ENCODE measurements at regions of chr3 and their contacts with region 1.

Region 1: DNA sequence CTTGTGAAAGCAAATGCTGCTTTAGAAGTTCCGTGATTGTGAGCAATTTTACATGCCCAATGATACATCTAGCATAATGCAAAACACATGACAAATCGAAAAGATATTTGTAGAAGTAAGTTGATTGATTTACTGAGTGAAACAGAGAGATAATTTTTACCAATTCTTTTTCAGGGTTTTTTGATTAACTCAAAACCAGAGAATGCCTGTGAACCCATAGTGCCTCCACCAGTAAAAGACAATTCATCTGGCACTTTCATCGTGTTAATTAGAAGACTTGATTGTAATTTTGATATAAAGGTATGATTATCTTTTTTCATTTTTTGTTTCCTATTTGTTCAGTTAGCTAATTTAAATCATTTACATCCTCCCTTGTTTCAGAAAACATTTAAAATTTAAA is 58.8 kb downstream of the RNF13 start:
- DNase-seq: no peak
- ATAC-seq: no peak
- H3K4me3 ChIP-seq: no peak overlapping the region
- H3K4me3 Mint-ChIP-seq: no peak overlapping the region
- H3K27ac ChIP-seq: no peak overlapping the region
- H3K27ac Mint-ChIP-seq: no peak overlapping the region
- H3K4me1 ChIP-seq: no peaks in the 10 kb centered on the region
- H3K4me1 Mint-ChIP-seq: peaks cover 9 to 19% (median 14%) of the 10 kb centered on the region in 3 donors
- H3K27me3 ChIP-seq: no peaks in the 10 kb centered on the region
- H3K27me3 Mint-ChIP-seq: no peaks in the 10 kb centered on the region

Region 2: GRCh38 chr3:149534671-149535332 is 337.1 kb before region 1 on chr3:
- CTCF ChIA-PET with region 1: no interaction called
- POLR2A ChIA-PET with region 1: interaction called in 1 of 2 experiments, 17 read pairs
- DNase-seq: no peak
- ATAC-seq: no peak
- H3K4me3 ChIP-seq: no peak overlapping the region
- H3K4me3 Mint-ChIP-seq: no peak overlapping the region
- H3K27ac ChIP-seq: no peak overlapping the region
- H3K27ac Mint-ChIP-seq: no peak overlapping the region
- H3K4me1 ChIP-seq: no peaks in the 10 kb centered on the region
- H3K4me1 Mint-ChIP-seq: peaks cover 2 to 9% (median 7%) of the 10 kb centered on the region in 3 donors
- H3K27me3 ChIP-seq: peaks cover 0 to 9% of the 10 kb centered on the region in 2 experiments
- H3K27me3 Mint-ChIP-seq: peaks cover 0 to 13% of the 10 kb centered on the region in 2 donors

Region 3: DNA sequence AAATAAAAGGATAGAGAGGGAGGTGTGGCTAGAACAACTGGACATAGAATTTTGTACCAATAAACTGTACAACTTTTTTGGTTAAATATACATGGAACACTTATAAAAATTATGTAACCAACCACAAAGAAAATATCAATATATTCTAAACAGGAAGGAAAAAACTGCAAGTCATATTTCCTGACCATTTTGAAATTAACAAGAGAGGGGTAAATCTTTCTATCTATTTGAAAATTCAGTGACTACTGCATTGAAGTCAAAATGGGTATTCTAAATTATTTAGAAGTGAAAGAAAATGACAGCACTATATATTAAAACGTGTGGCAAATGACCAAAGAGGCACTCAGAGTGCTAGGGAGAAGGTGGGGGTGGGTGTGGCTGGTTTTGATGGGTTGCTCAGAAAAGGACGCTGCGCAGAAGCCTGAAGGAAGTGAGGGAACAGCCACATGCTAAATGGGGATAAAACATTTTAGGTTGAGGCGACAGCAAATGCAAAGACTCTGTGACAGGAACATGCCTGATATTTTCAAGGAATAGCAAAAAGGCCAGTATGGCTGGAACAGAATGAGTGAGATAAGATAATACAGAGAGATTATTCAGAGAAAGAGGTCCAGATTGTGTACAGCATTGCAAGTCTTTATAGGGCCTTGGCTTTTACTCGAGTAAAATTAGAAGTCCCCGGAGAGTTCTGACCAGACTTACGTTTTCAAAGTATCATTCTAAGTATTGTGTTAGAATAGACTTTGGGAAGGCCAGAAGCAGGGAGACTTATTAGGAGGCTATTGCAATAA is 790.8 kb after region 1 on chr3:
- CTCF ChIA-PET with region 1: interaction called in 1 of 2 experiments, 13 read pairs
- POLR2A ChIA-PET with region 1: no interaction called
- DNase-seq: no peak
- ATAC-seq: no peak
- H3K4me3 ChIP-seq: no peak overlapping the region
- H3K4me3 Mint-ChIP-seq: no peak overlapping the region
- H3K27ac ChIP-seq: no peak overlapping the region
- H3K27ac Mint-ChIP-seq: no peak overlapping the region
- H3K4me1 ChIP-seq: peaks cover 0 to 5% of the 10 kb centered on the region in 2 experiments
- H3K4me1 Mint-ChIP-seq: peaks cover 5 to 15% (median 14%) of the 10 kb centered on the region in 3 donors
- H3K27me3 ChIP-seq: peaks cover 0 to 3% of the 10 kb centered on the region in 2 experiments
- H3K27me3 Mint-ChIP-seq: peaks cover 14% of the 10 kb centered on the region in 2 donors

Measured in T-cell (primary cell).